ENCODE measurements at regions of chr1 and their contacts with region 1.

Region 1: DNA sequence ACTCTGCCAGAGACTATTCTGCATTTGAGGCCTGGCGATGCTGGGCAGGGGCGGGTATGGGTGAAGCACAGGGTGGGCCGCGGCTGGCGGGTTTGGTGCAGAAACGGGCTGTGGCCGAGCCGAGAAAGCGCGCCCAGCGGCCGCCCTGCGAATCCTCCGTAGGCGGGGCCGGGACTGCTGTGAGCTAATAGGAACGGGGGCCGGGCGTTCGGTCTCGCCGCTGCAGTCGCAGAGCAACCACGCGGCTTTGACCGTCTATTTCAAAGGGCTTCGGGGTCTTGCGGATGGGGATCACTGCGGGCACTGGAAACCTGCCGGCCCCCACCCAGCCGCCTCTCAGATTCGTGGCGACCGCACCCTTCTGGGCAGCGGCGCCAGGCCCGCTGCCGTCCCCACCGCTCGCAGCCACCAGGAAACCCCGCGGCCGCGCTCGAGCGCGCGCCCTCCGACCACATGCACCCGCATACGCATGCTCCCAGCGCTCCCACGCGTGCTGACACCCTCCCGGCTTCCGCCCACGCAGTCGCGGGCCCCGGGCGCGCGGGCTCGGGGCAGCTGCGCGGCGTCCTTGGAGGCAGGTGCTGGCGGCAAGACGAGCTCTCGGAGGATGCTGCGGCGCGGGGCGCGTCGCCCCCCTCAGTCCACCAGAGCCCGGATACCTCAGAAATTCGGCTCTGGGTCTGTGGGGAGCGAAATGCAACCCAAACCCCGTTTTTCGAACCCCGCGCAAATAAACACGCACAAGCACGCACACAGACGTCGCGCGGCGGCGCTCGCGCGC is 32.6 kb downstream of the DNTTIP2 start:
- DNase-seq: peak; percentile 84

Region 2: DNA sequence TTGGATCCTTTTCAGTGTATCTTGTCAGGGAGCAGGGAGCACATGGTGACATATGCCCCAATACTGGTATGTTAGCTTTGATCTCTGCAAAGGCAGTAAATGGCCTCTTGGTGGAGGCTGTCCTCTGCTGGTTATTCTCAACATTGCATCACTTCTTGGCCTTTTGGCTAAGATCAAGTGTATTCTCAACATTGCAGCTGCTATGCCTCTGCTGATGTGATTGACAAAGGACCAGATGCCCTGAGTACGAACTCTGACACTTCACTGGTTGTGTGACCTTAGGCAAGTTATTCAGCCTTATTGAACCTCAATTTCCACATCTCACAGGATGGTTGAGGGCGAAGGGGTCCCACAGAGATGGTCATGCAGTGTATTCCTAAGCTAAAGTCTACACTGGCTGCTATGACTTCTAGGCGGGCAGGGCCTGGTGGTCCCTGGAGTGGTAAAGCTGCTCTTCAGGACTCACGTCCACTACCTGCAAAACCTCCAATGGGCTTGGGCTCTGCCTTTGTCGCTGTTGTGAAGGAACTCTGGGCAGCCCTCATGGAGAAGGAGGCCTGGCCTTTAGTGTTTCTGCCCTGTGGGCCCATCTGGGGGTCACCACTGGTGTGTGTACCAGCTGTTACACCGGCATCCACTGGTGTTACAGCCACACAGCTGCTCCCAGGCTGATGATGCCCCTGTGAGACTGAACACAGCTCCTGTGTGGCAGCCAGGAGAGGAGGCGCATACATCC is 32.2 kb before region 1 on chr1:
- CTCF ChIA-PET with region 1: interaction called, 12 read pairs
- POLR2A ChIA-PET with region 1: interaction called, 22 read pairs
- DNase-seq: peak; percentile 75

Region 3: DNA sequence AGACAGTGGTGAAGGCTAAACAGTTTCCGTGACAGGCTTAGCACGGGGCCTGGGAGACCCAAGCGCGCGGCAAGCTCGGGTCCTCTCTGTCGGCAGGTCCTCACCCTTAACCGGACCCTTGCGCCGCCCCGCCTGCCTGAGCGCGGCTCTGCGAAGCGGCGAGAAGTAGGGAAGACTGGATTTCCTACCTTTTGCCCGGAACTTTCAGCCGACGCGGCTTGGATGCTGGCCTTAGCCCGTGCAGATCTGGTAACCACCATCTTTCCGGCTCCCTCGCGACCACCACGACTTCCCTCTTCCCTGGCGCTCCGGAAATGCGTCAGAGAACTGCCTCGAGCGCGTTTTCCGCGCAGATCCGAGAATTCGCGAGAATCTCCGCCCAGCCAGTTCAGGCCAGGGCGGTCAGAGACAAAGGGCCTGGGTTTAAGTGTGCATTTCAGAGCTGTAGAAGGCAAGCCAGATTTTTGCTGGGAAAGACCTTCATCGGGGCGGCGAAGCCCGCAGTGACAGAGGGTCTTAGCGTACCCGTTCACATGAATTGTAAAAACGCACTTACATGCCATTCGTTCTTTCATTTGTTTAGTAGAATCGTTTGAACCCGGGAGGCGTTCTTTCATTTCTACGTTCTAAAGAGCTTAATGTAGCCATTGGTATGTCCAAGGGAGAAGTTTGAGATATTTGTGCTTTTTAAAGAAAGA is 32.6 kb after region 1 on chr1 and contains the start of gene DNTTIP2:
- CTCF ChIA-PET with region 1: no interaction called
- POLR2A ChIA-PET with region 1: interaction called, 17 read pairs
- DNase-seq: peak; percentile 97